HCT116 (cell line): ENCODE measurements at regions of chr22 and their contacts with region 1.

Region 1: DNA sequence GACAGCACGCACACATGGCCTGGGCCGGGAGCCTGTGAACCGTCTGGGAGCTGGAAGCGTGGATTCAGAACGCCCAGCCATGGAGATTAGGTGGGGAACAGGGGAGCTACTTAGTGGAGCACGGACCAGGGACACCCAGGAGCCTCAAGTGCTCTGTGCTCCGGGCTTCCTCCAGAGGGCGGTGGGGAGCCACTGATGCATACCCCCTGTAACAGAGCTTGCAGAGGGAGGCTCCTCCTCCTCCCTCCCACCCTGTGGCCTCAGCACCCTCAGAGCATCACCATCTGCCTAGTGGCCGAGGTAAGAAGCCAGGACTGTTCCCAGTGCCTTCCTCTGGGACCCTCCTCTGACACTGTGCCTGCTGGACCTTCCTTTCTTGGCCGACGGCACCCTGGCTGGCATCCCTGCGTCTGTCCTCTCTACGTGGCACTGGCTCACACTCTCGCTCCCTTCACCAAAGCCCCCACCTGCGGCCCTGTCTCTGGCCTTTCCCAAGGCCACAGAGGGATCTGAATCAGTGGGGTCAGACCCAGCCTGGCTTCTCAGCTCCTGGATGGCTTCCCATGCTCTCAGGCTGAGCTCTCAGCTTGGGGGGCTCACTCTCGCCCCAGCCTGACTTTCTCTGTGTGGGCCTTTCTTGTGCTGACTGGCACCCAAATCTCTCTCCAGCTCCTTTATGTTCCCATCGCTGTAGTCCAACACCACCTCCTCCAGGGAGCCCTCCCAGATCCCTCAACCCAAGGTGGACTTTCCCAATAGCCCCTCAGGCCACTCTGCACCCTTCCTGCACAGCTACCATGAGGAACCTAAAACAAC is 780.9 kb downstream of the BRD1 start:
- DNase-seq: peak; percentile 46
- ATAC-seq: peak; percentile 99
- H3K4me3 ChIP-seq: no peak overlapping the region
- H3K27ac ChIP-seq: no peak overlapping the region
- H3K4me1 ChIP-seq: no peaks in the 10 kb centered on the region
- H3K27me3 ChIP-seq: peaks cover 39% of the 10 kb centered on the region
- CTCF ChIP-seq: peak; percentile 51 to 86 (median 72); a peak in 5 of 6 replicates
- POLR2A ChIP-seq: no peak
- RAD21 ChIP-seq: peak; percentile 80

Region 2: GRCh38 chr22:49170053-49170452 is 123.3 kb after region 1 on chr22:
- CTCF ChIA-PET with region 1: interaction called, 7 read pairs
- POLR2A ChIA-PET with region 1: no interaction called
- RAD21 ChIA-PET with region 1: interaction called in 1 of 2 experiments, 3 read pairs
- intact Hi-C with region 1: loop called (anchors 1 kb)
- DNase-seq: no peak
- ATAC-seq: peak; percentile 61
- H3K4me3 ChIP-seq: no peak overlapping the region
- H3K27ac ChIP-seq: no peak overlapping the region
- H3K4me1 ChIP-seq: no peaks in the 10 kb centered on the region
- H3K27me3 ChIP-seq: peaks cover 34% of the 10 kb centered on the region; the same call in 1 of the 2 replicates
- CTCF ChIP-seq: 0 out of 6 replicates have a peak, but pooled peaks of 1 of the 3 experiments have one; percentile 24
- POLR2A ChIP-seq: no peak
- RAD21 ChIP-seq: peak; percentile 34

Region 3: DNA sequence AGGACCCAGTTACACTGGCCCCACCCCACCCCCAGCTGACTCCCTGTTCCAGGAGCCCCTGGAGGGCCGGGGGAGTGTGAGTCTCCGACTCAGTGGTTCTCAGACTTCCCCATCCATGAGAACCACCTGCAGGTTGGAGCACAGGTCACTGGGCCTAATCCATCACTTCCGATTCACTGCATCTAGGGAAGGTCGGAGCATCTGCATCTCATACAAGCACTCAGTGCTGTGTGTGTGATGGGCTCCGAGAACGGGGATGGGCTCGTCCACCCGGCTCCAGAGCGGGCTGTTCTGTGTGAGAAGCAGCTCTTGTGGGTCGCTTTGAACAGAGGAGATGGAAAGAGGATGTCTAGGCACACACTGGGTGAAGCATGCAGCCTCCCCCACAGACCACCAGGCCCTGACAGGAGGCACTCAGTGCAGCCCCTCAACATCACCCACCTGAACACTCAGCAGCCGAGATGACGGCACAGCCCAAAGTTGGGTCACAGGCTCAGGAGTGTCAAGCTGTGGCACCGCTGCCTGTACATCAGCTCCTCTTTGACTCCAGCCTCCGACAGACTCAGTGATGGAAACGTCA is 239.5 kb after region 1 on chr22:
- CTCF ChIA-PET with region 1: interaction called, 10 read pairs
- POLR2A ChIA-PET with region 1: no interaction called
- RAD21 ChIA-PET with region 1: no interaction called
- intact Hi-C with region 1: no loop called
- DNase-seq: no peak
- ATAC-seq: no peak
- H3K4me3 ChIP-seq: no peak overlapping the region
- H3K27ac ChIP-seq: no peak overlapping the region
- H3K4me1 ChIP-seq: peaks cover 0 to 22% of the 10 kb centered on the region in 2 experiments; a peak in 2 of 4 replicates
- H3K27me3 ChIP-seq: peaks cover 73% of the 10 kb centered on the region
- CTCF ChIP-seq: no peak
- POLR2A ChIP-seq: no peak
- RAD21 ChIP-seq: no peak